Psoas muscle (tissue), 8 donors: ENCODE measurements at regions of chr17 and their contacts with region 1.

Region 1: GRCh38 chr17:33550261-33550660 is 257.2 kb upstream of the ASIC2 start:
- DNase-seq: no peak
- ATAC-seq: no peak
- H3K4me3 ChIP-seq: no peak overlapping the region
- H3K27ac ChIP-seq: no peak overlapping the region
- H3K4me1 ChIP-seq: no peaks in the 10 kb centered on the region
- H3K27me3 ChIP-seq: peaks cover 0 to 9% (median 0%) of the 10 kb centered on the region in 3 donors
- CTCF ChIP-seq: no peak

Region 2: GRCh38 chr17:33363475-33363874 is 186.8 kb before region 1 on chr17:
- intact Hi-C with region 1: no loop called
- DNase-seq: no peak
- ATAC-seq: no peak
- H3K4me3 ChIP-seq: no peak overlapping the region
- H3K27ac ChIP-seq: no peak overlapping the region
- H3K4me1 ChIP-seq: no peaks in the 10 kb centered on the region
- H3K27me3 ChIP-seq: peaks cover 0 to 4% (median 3%) of the 10 kb centered on the region in 3 donors
- CTCF ChIP-seq: no peak

Region 3: DNA sequence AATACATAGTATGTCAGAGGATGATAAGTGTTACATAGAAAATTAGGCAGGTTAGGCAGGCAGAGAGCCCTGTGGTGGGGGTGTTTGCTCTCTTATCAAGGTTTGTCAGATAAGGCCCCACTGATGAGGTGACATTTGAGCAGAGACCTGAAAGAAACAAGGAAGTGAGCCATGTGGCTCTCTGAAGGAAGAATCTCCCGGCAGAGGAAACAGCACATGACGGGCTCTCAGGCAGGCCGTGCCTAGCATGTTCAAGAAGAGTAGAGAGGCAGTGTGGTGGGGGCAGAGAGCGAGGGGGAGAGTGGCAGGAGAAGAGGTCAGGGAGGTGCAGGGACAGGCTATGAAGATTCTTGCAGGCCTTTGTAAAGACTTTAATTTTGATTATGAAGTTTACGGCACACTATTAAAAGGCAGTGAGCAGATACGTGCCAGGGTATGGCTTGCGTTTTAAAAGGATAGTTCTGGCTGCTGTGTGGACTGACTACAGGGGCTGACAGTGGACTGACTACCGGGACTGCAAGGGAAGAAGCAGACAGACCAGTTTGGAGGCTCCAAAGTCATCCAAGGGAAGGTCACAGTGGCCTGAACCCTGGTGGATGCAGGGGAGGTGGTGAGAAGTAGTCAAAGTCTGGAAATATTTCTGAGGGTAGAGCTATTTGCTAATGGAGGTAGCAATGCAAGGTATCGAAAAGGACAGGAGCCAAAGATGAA is 175.0 kb before region 1 on chr17:
- intact Hi-C with region 1: no loop called
- DNase-seq: no peak
- ATAC-seq: no peak
- H3K4me3 ChIP-seq: no peak overlapping the region
- H3K27ac ChIP-seq: no peak overlapping the region
- H3K4me1 ChIP-seq: no peaks in the 10 kb centered on the region
- H3K27me3 ChIP-seq: no peaks in the 10 kb centered on the region
- CTCF ChIP-seq: no peak

Region 4: GRCh38 chr17:33506889-33507650 is 43.2 kb before region 1 on chr17:
- intact Hi-C with region 1: loop called in 1 of 2 experiments (anchors 10 kb)
- DNase-seq: no peak
- ATAC-seq: no peak
- H3K4me3 ChIP-seq: no peak overlapping the region
- H3K27ac ChIP-seq: no peak overlapping the region
- H3K4me1 ChIP-seq: no peaks in the 10 kb centered on the region
- H3K27me3 ChIP-seq: no peaks in the 10 kb centered on the region
- CTCF ChIP-seq: no peak

Region 5: DNA sequence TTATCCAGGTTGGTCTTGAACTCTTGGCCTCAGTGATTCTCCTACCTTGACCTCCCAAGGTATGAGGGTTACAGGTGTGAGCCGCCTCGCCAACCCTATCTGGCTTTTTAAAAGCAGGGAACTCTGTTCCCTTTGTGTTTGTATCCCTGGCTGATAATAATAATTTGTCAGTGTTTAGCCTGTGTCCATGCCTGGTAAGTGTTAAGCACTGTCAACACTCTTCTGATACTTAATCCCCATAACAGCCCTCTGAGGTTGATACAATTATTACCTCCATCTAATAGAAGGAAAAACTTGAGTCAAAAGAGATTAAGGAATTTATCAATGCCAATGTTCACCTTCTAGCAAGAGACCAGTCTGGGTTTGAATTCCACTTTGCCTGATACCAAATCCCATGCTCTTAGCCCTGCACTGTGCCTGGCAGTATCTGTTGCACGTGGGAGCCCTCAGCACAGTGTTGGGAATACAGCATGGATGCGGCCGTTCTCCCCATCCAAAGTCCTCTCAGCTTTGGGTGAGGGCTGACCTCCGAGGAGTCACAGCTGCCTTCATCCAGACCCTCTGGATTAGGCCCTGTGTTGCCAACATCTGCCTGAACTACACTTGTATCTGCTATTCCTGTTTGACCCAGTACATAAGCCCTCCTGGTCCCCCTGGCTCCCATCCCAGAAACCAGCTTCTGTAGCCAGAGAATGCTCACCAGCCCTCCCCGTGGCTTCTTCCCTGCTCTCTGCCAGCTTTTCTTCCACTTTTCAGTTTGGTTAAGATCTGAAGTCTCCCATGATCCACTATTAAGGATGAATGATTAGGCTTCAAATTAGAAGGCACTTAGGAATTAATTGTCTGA is 78.5 kb after region 1 on chr17:
- intact Hi-C with region 1: no loop called
- DNase-seq: no peak
- ATAC-seq: no peak
- H3K4me3 ChIP-seq: no peak overlapping the region
- H3K27ac ChIP-seq: no peak overlapping the region
- H3K4me1 ChIP-seq: no peaks in the 10 kb centered on the region
- H3K27me3 ChIP-seq: peaks cover 0 to 5% (median 0%) of the 10 kb centered on the region in 3 donors
- CTCF ChIP-seq: no peak